ENCODE measurements at regions of chr1 and their contacts with region 1.

Region 1: GRCh38 chr1:10909697-10910671 is 102.5 kb upstream of the TARDBP start:
- DNase-seq: no peak
- ATAC-seq: peak; percentile 95
- H3K4me3 ChIP-seq: no peak overlapping the region
- H3K27ac ChIP-seq: no peak overlapping the region
- H3K4me1 ChIP-seq: no peaks in the 10 kb centered on the region
- H3K27me3 ChIP-seq: no peaks in the 10 kb centered on the region
- CTCF ChIP-seq: peak in 2 of 3 experiments; percentile 67 to 86; a peak in 5 of 6 replicates
- POLR2A ChIP-seq: no peak
- RAD21 ChIP-seq: peak; percentile 88

Region 2: GRCh38 chr1:10514490-10515235 is 395.3 kb before region 1 on chr1:
- CTCF ChIA-PET with region 1: no interaction called
- POLR2A ChIA-PET with region 1: no interaction called
- RAD21 ChIA-PET with region 1: no interaction called
- intact Hi-C with region 1: loop called (anchors 1 kb)
- DNase-seq: peak; percentile 29
- ATAC-seq: peak; percentile 56
- H3K4me3 ChIP-seq: no peak overlapping the region
- H3K27ac ChIP-seq: no peak overlapping the region
- H3K4me1 ChIP-seq: peaks cover 14 to 20% of the 10 kb centered on the region in 2 experiments
- H3K27me3 ChIP-seq: no peaks in the 10 kb centered on the region
- CTCF ChIP-seq: peak; percentile 49 to 66 (median 62)
- POLR2A ChIP-seq: no peak
- RAD21 ChIP-seq: peak; percentile 79

Measured in HCT116 (cell line).